Heart right ventricle (tissue), 16 donors: ENCODE measurements at regions of chr5 and their contacts with region 1.

Region 1: DNA sequence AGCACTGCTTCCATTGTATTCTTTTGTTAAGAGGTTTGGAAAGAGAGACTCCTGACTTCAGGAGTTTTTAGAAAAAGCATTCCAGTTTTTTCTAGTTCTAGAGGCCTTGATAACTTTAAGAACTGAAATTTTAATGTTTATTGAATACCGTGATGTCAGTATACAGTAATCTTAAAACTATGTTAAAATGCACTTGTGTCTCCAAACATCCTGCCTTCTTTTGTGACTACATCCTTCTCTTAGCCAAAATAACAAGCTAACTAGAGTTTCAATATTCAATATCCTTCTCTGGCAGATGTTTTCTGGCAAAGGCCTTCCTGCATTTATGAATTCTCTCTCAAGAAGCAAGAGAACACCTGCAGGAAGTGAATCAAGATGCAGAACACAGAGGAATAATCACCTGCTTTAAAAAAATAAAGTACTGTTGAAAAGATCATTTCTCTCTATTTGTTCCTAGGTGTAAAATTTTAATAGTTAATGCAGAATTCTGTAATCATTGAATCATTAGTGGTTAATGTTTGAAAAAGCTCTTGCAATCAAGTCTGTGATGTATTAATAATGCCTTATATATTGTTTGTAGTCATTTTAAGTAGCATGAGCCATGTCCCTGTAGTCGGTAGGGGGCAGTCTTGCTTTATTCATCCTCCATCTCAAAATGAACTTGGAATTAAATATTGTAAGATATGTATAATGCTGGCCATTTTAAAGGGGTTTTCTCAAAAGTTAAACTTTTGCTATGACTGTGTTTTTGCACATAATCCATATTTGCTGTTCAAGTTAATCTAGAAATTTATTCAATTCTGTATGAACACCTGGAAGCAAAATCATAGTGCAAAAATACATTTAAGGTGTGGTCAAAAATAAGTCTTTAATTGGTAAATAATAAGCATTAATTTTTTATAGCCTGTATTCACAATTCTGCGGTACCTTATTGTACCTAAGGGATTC is 43.1 kb downstream of the NDFIP1 start:
- DNase-seq: peak in 1 of 2 donors; percentile 80
- ATAC-seq: peak in 7 of 8 donors; percentile 59 to 75 (median 70)
- H3K4me3 ChIP-seq: no peak overlapping the region
- H3K27ac ChIP-seq: peak overlapping the region in 2 of 10 donors; percentile 16 to 24
- H3K4me1 ChIP-seq: peaks cover 0 to 12% (median 7%) of the 10 kb centered on the region in 9 donors
- H3K27me3 ChIP-seq: no peaks in the 10 kb centered on the region
- CTCF ChIP-seq: peak; percentile 79 to 93 (median 85)

Region 2: GRCh38 chr5:141973871-141974595 is 177.7 kb before region 1 on chr5:
- intact Hi-C with region 1: no loop called
- DNase-seq: no peak
- ATAC-seq: no peak
- H3K4me3 ChIP-seq: no peak overlapping the region
- H3K27ac ChIP-seq: no peak overlapping the region
- H3K4me1 ChIP-seq: peaks cover 0 to 70% (median 35%) of the 10 kb centered on the region in 9 donors
- H3K27me3 ChIP-seq: no peaks in the 10 kb centered on the region
- CTCF ChIP-seq: no peak

Region 3: DNA sequence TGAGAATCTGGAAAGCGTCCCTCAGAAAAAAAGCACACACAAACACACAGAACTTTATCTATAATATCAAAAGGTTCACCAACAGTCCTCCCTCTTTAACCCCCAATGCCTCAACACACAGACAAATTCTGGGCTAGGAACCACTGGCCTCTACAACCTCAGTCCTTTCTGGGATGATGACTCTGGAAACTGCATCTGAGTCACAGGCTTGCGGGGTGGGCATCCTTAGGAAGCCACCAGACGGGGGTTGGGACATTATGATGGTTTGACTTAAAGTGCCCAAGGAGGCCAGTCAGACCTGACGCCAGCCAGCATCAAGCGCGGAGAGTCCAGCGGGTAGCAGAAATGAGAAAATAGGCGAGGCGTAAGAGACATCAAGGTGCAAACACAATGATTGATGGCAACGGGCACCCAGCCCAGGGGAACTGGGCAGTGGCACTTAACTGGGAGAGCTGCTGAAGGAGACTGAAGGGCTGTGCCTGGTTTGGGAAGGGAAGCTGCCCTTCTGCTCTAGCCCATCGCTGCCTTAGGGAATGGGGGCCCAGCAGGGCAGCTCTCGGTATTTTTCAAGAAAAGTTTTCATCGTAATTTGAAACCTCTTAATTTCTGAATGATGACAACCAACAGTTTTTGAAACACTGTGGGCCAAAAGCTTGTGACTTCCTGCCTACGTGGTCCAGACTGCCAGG is 152.4 kb after region 1 on chr5:
- intact Hi-C with region 1: loop called in 1 of 10 experiments (anchors 10 kb)
- DNase-seq: peak; percentile 35 to 37
- ATAC-seq: peak; percentile 36 to 78 (median 68)
- H3K4me3 ChIP-seq: no peak overlapping the region
- H3K27ac ChIP-seq: no peak overlapping the region
- H3K4me1 ChIP-seq: peaks cover 0 to 14% (median 10%) of the 10 kb centered on the region in 9 donors
- H3K27me3 ChIP-seq: no peaks in the 10 kb centered on the region
- CTCF ChIP-seq: no peak

Region 4: GRCh38 chr5:142324871-142325724 is 173.4 kb after region 1 on chr5 and contains the start of gene SPRY4:
- intact Hi-C with region 1: loop called in 4 of 10 experiments (anchors 5 to 10 kb)
- DNase-seq: peak; percentile 94 to 95
- ATAC-seq: peak; percentile 75 to 89 (median 81)
- H3K4me3 ChIP-seq: peak within 1 kb of the TSS; percentile 63 to 99 (median 79)
- H3K27ac ChIP-seq: peak within 1 kb of the TSS; percentile 88 to 97 (median 92)
- H3K4me1 ChIP-seq: peaks cover 13 to 73% (median 56%) of the 10 kb centered on the region in 9 donors
- H3K27me3 ChIP-seq: peaks cover 0 to 76% (median 0%) of the 10 kb centered on the region in 7 donors
- CTCF ChIP-seq: peak in 1 of 9 donors; percentile 4
- total RNA-seq, gene SPRY4: 7.4 to 13.7 (median 10.1) TPM

Region 5: GRCh38 chr5:142356716-142357473 is 205.2 kb after region 1 on chr5:
- intact Hi-C with region 1: loop called in 3 of 10 experiments (anchors 5 to 10 kb)
- DNase-seq: peak; percentile 86 to 90
- ATAC-seq: peak; percentile 90 to 95 (median 92)
- H3K4me3 ChIP-seq: peak overlapping the region; percentile 38 to 81 (median 66)
- H3K27ac ChIP-seq: peak overlapping the region; percentile 90 to 98 (median 96)
- H3K4me1 ChIP-seq: peaks cover 0 to 28% (median 18%) of the 10 kb centered on the region in 9 donors
- H3K27me3 ChIP-seq: peaks cover 0 to 65% (median 0%) of the 10 kb centered on the region in 7 donors
- CTCF ChIP-seq: peak in 2 of 9 donors; percentile 1 to 6

Region 6: GRCh38 chr5:142432369-142432863 is 280.7 kb after region 1 on chr5:
- intact Hi-C with region 1: loop called in 1 of 10 experiments (anchors 10 kb)
- DNase-seq: peak in 1 of 2 donors; percentile 13
- ATAC-seq: peak in 5 of 8 donors; percentile 32 to 61 (median 45)
- H3K4me3 ChIP-seq: no peak overlapping the region
- H3K27ac ChIP-seq: peak overlapping the region in 4 of 10 donors; percentile 7 to 70 (median 52)
- H3K4me1 ChIP-seq: peaks cover 5 to 59% (median 27%) of the 10 kb centered on the region in 9 donors
- H3K27me3 ChIP-seq: peaks cover 0 to 13% (median 0%) of the 10 kb centered on the region in 7 donors
- CTCF ChIP-seq: no peak